ENCODE measurements at regions of chr1 and their contacts with region 1.

Region 1: DNA sequence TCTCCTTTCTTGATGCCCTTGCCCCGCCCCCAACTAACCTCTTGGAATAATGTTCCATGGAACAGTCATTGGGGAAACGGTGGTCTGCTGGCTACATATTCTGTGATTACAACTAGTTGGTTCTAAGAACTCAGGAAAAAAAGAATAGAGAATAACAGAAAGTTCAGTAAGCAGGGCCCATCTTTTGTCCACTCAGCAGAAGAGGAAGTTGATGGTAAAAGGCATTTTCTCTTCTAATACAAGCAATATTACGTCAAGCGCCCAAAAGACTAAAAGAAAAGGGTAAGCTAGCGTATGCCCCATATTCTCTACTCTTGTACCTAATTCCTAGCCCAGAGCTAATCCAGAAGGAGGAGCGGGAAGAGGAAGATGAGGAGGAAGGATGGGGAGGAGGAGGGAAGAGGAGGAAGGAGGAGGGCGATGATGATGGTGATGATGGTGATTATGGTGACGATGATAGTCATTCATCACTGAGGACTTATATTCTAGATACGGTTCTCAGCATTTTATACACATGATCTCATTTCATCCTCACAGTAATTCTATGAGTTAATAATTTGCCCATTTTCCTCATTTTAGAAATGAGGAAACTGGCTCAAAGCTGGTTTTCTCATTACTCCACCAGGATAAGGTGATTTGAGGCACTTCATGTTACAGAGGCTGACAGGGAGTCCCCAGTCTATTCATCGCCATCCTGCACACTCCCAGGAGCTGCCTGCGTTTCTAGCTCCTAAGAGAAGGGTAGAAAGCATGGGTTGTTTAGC is 76.6 kb upstream of the EFHD2 start:
- DNase-seq: no peak
- ATAC-seq: no peak
- H3K4me3 ChIP-seq: no peak overlapping the region
- H3K27ac ChIP-seq: no peak overlapping the region
- H3K4me1 ChIP-seq: 0 out of 2 replicates have a peak, but pooled peaks cover 4% of the 10 kb centered on the region
- H3K27me3 ChIP-seq: no peaks in the 10 kb centered on the region
- CTCF ChIP-seq: no peak

Region 2: DNA sequence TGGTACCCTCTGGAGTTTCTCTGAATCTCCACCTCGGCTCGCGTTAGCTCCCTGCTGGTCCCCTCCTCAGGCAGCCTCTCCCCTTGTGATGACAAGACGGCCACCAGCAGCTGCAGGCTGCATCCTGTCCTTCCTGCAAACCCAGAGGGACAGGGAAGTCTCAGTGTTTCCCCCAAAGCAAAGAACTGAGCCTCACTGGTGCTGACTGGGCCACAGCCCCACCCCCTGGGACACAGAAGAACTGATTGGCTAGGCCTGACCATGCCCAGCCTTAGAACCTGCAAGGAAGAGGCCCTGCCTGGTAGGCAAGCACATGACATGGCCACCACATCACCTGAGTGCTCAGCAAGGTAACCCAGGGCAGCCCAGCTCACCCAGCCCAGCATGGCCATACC is 145.0 kb before region 1 on chr1:
- CTCF ChIA-PET with region 1: no interaction called
- POLR2A ChIA-PET with region 1: no interaction called
- in situ Hi-C with region 1: no loop called
- intact Hi-C with region 1: no loop called
- DNase-seq: no peak
- ATAC-seq: no peak
- H3K4me3 ChIP-seq: no peak overlapping the region
- H3K27ac ChIP-seq: no peak overlapping the region
- H3K4me1 ChIP-seq: peaks cover 22% of the 10 kb centered on the region
- H3K27me3 ChIP-seq: no peaks in the 10 kb centered on the region
- CTCF ChIP-seq: no peak

Region 3: GRCh38 chr1:15304701-15305467 is 28.2 kb before region 1 on chr1:
- CTCF ChIA-PET with region 1: interaction called, 15 read pairs
- POLR2A ChIA-PET with region 1: no interaction called
- in situ Hi-C with region 1: no loop called
- intact Hi-C with region 1: no loop called
- DNase-seq: peak; percentile 36
- ATAC-seq: peak; percentile 80
- H3K4me3 ChIP-seq: no peak overlapping the region
- H3K27ac ChIP-seq: no peak overlapping the region
- H3K4me1 ChIP-seq: no peaks in the 10 kb centered on the region
- H3K27me3 ChIP-seq: no peaks in the 10 kb centered on the region
- CTCF ChIP-seq: peak; percentile 92

Region 4: DNA sequence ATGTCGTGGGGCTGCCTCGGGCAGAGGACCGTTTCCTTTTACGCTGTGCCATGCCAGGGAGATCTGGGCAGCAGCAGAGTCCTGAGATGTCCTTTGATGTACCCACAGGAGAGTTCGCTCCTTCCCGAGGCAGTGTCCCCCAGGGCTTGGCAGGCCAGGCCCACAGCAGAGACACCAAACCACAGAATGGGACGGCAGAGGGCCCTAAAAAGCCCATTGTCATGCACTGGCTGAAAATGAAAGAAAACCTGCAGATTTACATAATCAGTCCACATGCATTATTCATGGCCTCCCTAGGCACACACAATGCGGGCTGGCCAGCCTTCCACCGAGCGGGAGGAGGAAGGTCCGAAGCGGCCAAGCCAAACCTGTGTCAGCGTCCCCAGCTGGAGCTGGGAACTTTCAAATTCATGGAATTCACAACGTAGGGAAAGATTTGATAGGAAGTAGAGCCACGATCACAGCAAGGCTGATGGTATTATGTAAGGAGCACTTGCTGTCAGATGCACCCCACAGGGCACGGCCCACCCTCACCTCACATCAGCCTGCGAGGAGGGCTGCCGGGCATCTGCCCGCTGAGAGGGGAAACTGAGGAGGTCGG is 51.3 kb after region 1 on chr1:
- CTCF ChIA-PET with region 1: no interaction called
- POLR2A ChIA-PET with region 1: no interaction called
- in situ Hi-C with region 1: no loop called
- intact Hi-C with region 1: no loop called
- DNase-seq: no peak
- ATAC-seq: no peak
- H3K4me3 ChIP-seq: no peak overlapping the region
- H3K27ac ChIP-seq: no peak overlapping the region
- H3K4me1 ChIP-seq: no peaks in the 10 kb centered on the region; the same call in 1 of the 2 replicates
- H3K27me3 ChIP-seq: no peaks in the 10 kb centered on the region
- CTCF ChIP-seq: no peak